ENCODE measurements at regions of chr1 and their contacts with region 1.

Region 1: DNA sequence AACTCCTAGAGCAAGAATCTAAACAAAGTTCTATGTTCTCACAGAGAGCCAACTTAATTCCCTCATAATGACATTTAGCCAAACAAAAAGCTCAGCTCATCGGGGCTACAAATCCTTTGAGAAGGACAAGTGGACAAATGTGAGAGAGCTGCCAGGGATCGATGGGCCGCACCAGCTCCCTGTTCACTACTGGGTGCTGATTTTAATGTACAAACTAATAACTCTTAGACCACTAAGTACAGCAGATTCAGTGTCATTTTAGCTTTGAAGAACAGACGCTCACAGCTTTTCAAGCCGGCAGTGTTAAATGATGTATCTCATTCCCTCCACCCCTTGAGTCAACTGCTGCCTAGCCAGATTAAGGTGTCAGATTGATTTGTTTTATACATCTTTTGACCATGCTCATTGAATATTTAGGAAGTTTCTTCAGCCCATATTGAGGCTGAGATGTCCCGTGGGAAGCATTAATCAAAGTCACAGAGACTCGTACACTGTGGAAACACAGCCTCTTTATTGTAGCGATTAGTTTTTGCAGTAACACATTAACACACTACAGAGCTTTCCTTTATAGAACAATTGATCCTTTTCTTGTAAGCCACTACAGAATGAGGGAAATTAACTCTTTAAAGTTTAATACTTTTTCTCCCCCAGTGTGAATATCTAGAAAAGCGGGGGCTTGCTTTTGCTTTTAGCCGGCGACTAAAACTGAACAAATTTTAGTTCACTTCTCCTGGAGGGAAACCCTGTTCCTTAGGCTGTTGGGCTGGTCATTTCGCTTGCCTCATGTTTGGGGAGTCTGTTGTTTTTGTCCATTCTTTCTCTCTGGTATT is 21.2 kb downstream of the PROX1 start:
- DNase-seq: no peak
- ATAC-seq: no peak
- H3K4me3 ChIP-seq: no peak overlapping the region
- H3K4me3 Mint-ChIP-seq: no peak overlapping the region
- H3K27ac ChIP-seq: no peak overlapping the region
- H3K27ac Mint-ChIP-seq: no peak overlapping the region
- H3K4me1 ChIP-seq: no peaks in the 10 kb centered on the region
- H3K4me1 Mint-ChIP-seq: no peaks in the 10 kb centered on the region
- H3K27me3 ChIP-seq: no peaks in the 10 kb centered on the region
- H3K27me3 Mint-ChIP-seq: peaks cover 3 to 18% of the 10 kb centered on the region in 2 donors

Region 2: DNA sequence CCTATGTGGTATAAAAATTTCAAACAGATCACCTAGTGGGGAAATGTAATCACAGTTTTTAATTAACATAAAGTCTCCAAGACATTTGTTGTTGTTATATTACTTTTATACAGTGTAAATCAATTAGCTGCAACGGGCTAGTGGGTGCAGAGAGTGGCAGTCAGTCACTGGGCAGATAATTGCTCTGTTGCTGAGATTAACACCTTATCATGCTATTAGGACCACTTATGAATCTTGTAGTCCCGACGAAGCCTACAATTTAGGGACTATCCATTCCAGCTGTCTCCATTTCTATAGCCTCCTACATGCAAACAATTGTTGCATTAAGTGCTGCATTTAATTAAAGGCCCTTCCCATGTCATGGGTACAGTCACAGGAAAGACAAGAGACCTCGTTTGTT is 180.1 kb before region 1 on chr1:
- CTCF ChIA-PET with region 1: no interaction called
- POLR2A ChIA-PET with region 1: interaction called in 1 of 2 experiments, 11 read pairs
- DNase-seq: no peak
- ATAC-seq: no peak
- H3K4me3 ChIP-seq: no peak overlapping the region
- H3K4me3 Mint-ChIP-seq: no peak overlapping the region
- H3K27ac ChIP-seq: no peak overlapping the region
- H3K27ac Mint-ChIP-seq: no peak overlapping the region
- H3K4me1 ChIP-seq: no peaks in the 10 kb centered on the region
- H3K4me1 Mint-ChIP-seq: no peaks in the 10 kb centered on the region
- H3K27me3 ChIP-seq: no peaks in the 10 kb centered on the region
- H3K27me3 Mint-ChIP-seq: no peaks in the 10 kb centered on the region

Region 3: DNA sequence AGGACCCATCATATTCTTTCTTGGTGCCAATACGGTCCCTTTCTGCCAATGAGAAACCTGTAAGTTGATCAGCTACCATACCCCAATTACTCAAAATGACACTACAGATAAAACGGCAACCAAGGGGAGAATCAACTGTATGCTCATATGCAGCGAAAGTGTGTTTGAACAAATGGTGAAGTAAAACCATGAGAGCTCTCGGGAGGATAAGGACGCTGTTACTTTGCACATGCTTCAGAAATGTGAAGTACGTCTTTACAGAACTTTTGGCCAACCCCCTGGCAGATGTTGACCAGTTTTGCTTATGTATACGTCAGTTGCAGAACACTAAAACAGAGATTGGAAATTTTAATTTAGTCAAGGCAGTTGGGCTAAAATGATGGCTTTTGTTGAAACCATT is 58.4 kb after region 1 on chr1:
- CTCF ChIA-PET with region 1: no interaction called
- POLR2A ChIA-PET with region 1: no interaction called
- DNase-seq: no peak
- ATAC-seq: no peak
- H3K4me3 ChIP-seq: no peak overlapping the region
- H3K4me3 Mint-ChIP-seq: no peak overlapping the region
- H3K27ac ChIP-seq: no peak overlapping the region
- H3K27ac Mint-ChIP-seq: no peak overlapping the region
- H3K4me1 ChIP-seq: no peaks in the 10 kb centered on the region
- H3K4me1 Mint-ChIP-seq: no peaks in the 10 kb centered on the region
- H3K27me3 ChIP-seq: no peaks in the 10 kb centered on the region
- H3K27me3 Mint-ChIP-seq: peaks cover 4 to 9% of the 10 kb centered on the region in 2 donors